CD4-positive, alpha-beta T cell (primary cell): ENCODE measurements at regions of chr19 and their contacts with region 1.

Region 1: GRCh38 chr19:1478934-1479707 is at the start of gene C19orf25:
- DNase-seq: peak; percentile 82 to 95 (median 89)
- ATAC-seq: peak; percentile 96
- H3K4me3 ChIP-seq: peak within 1 kb of the TSS; percentile 91
- H3K4me3 Mint-ChIP-seq: peak within 1 kb of the TSS; percentile 96
- H3K27ac ChIP-seq: peak within 1 kb of the TSS; percentile 59 to 80
- H3K27ac Mint-ChIP-seq: peak within 1 kb of the TSS; percentile 86
- H3K4me1 ChIP-seq: peaks cover 23% of the 10 kb centered on the region
- H3K4me1 Mint-ChIP-seq: peaks cover 18% of the 10 kb centered on the region
- H3K27me3 ChIP-seq: no peaks in the 10 kb centered on the region
- H3K27me3 Mint-ChIP-seq: no peaks in the 10 kb centered on the region
- CTCF ChIP-seq: no peak
- total RNA-seq, gene C19orf25: 14.9 to 15.8 TPM

Region 2: DNA sequence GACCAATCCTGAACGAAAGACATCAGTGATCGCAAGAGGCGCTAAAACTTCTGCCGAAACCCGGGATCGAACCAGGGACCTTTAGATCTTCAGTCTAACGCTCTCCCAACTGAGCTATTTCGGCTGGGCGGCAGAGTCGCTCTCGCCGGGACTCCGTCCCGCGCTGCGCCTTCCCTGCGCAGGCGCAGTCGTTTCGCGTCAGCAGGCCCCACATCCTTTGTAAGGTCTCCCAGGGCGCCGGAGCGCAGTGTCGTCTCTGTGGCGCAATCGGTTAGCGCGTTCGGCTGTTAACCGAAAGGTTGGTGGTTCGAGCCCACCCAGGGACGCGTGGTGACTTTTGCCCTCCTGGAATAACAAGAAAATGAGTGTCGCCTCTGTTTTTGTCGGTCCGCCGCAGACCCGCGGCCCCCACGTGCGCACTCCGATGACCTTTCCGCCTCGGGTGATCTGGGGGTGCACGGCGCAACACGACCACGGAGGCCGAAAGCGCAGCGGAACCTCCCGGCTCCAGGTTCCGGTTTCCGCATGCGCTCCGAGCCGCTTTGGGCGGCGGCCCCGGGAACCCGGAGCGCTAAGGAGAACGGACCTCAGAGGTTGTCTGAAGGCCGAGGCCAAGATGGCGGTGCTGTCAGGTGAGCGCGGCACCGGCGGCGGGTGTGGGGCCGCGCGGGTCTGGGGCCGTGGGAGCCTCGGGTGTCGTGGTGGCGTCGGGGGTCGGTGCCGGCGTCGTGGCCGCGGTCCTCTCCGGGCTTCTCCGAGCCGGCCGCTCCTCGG is 95.6 kb before region 1 on chr19 and contains the start of gene NDUFS7:
- CTCF ChIA-PET with region 1: no interaction called
- POLR2A ChIA-PET with region 1: no interaction called
- intact Hi-C with region 1: loop called in 1 of 2 experiments (anchors 1 kb)
- DNase-seq: peak; percentile 85 to 100 (median 94)
- ATAC-seq: peak; percentile 90
- H3K4me3 ChIP-seq: peak within 1 kb of the TSS; percentile 92
- H3K4me3 Mint-ChIP-seq: peak within 1 kb of the TSS; percentile 97
- H3K27ac ChIP-seq: peak within 1 kb of the TSS; percentile 70 to 87
- H3K27ac Mint-ChIP-seq: peak within 1 kb of the TSS; percentile 98
- H3K4me1 ChIP-seq: peaks cover 34% of the 10 kb centered on the region
- H3K4me1 Mint-ChIP-seq: peaks cover 19% of the 10 kb centered on the region
- H3K27me3 ChIP-seq: no peaks in the 10 kb centered on the region
- H3K27me3 Mint-ChIP-seq: peaks cover 11% of the 10 kb centered on the region
- CTCF ChIP-seq: no peak
- total RNA-seq, gene NDUFS7: 40.0 to 42.6 TPM

Region 3: GRCh38 chr19:1438035-1438932 is 40.8 kb before region 1 on chr19 and contains the start of gene RPS15:
- CTCF ChIA-PET with region 1: no interaction called
- POLR2A ChIA-PET with region 1: no interaction called
- intact Hi-C with region 1: loop called in 1 of 2 experiments (anchors 2 kb)
- DNase-seq: peak; percentile 93 to 99 (median 96)
- ATAC-seq: peak; percentile 88
- H3K4me3 ChIP-seq: peak within 1 kb of the TSS; percentile 96
- H3K4me3 Mint-ChIP-seq: peak within 1 kb of the TSS; percentile 100
- H3K27ac ChIP-seq: peak within 1 kb of the TSS; percentile 83 to 90
- H3K27ac Mint-ChIP-seq: peak within 1 kb of the TSS; percentile 92
- H3K4me1 ChIP-seq: peaks cover 32% of the 10 kb centered on the region
- H3K4me1 Mint-ChIP-seq: peaks cover 25% of the 10 kb centered on the region
- H3K27me3 ChIP-seq: no peaks in the 10 kb centered on the region
- H3K27me3 Mint-ChIP-seq: no peaks in the 10 kb centered on the region
- CTCF ChIP-seq: peak; percentile 97
- total RNA-seq, gene RPS15: 2,193 to 2,200 TPM

Region 4: GRCh38 chr19:1490311-1491113 is 11.4 kb after region 1 on chr19 and contains the start of gene PCSK4:
- CTCF ChIA-PET with region 1: no interaction called
- POLR2A ChIA-PET with region 1: interaction called, 3 read pairs
- intact Hi-C with region 1: loop called in 1 of 2 experiments (anchors 1 kb)
- DNase-seq: peak; percentile 96 to 99 (median 98)
- ATAC-seq: peak; percentile 86
- H3K4me3 ChIP-seq: peak within 1 kb of the TSS; percentile 61
- H3K4me3 Mint-ChIP-seq: peak within 1 kb of the TSS; percentile 84
- H3K27ac ChIP-seq: peak within 1 kb of the TSS; percentile 29 to 34
- H3K27ac Mint-ChIP-seq: peak within 1 kb of the TSS; percentile 60
- H3K4me1 ChIP-seq: peaks cover 23% of the 10 kb centered on the region
- H3K4me1 Mint-ChIP-seq: peaks cover 12% of the 10 kb centered on the region
- H3K27me3 ChIP-seq: no peaks in the 10 kb centered on the region
- H3K27me3 Mint-ChIP-seq: no peaks in the 10 kb centered on the region
- CTCF ChIP-seq: no peak
- total RNA-seq, gene PCSK4: 4.2 to 5.2 TPM

Region 5: DNA sequence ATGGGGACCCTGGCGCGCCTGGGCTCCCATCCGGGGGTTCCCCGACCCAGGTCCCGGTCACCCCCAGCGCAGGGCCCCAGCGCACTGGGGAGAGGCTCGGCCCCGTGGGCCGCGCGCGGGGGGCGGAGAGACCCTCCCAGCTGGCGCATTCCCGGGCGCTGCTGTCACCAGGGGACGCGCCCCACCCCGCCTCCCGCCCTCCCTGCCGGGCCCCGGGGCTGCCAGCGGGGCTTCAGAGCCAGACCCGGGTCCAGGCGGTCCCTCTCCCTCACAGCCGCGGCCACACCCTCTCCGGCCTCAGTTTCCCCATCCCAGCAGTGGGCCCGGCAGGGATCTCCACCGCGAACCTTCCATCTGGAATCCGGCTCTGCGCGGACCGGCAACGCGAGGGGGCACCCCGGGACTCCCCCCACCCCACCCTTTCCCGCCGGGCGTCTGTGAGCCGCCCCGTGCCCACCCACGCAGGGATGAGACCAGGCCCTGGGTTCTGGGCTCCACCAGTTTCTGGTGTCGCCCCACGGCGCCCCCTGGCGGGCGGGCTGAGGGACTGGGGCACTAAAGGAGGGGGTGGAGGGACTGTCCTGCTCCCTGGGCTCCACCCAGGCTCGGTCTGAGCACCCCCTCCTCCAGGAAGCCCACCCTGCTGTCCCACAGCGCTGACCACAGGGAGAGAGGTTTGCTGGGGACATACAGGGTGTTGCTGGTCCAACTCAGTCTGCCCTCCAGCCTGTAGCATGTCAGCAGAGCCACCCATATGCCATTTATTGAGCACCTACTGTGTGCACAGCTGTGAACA is 34.6 kb after region 1 on chr19:
- CTCF ChIA-PET with region 1: no interaction called
- POLR2A ChIA-PET with region 1: no interaction called
- intact Hi-C with region 1: loop called in 1 of 2 experiments (anchors 5 kb)
- DNase-seq: peak; percentile 53 to 83 (median 64)
- ATAC-seq: peak; percentile 70
- H3K4me3 ChIP-seq: peak overlapping the region; percentile 25
- H3K4me3 Mint-ChIP-seq: peak overlapping the region; percentile 34
- H3K27ac ChIP-seq: no peak overlapping the region
- H3K27ac Mint-ChIP-seq: no peak overlapping the region
- H3K4me1 ChIP-seq: peaks cover 26% of the 10 kb centered on the region
- H3K4me1 Mint-ChIP-seq: peaks cover 13% of the 10 kb centered on the region
- H3K27me3 ChIP-seq: no peaks in the 10 kb centered on the region
- H3K27me3 Mint-ChIP-seq: peaks cover 13% of the 10 kb centered on the region
- CTCF ChIP-seq: peak; percentile 63